ENCODE measurements at regions of chr10 and their contacts with region 1.

Region 1: DNA sequence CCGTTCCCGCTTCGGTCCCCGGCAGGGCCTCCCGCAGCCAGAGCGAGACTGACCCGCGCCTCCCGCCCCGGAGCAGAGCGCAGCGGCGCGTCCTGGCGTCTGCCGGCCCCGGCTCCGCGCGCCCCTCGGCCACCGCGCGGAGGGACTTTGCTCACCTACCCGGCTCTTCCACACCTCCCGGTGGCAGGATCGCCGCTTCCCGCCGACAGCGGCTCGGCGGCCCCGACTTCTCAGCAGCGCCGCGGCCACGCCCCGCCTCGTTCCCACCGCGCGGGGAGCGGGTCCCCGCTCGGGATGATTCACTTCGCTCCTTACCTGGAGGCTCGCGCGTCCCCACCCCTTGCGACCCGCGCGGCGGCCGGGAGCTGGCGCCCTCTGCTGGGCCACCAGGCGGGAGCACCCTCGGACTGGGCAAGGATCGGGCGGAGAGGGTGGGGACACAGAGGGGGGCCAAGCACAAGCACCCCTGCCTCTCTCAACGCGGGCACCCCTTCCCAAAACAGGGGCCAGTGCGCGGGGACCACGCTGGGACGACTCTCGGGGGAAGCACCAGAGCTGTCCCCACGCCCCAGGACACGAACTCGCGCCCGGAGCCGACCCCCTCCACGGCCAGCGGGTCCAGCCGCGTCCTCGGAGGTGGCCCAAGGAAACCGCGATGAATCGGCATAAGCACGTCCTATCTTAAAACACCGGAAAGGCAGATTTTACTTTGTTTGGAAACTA is 101.0 kb upstream of the SVIL start:
- DNase-seq: peak; percentile 60 to 94
- H3K4me3 ChIP-seq: peak overlapping the region; percentile 74 to 97
- H3K27ac ChIP-seq: peak overlapping the region; percentile 95 to 98
- H3K4me1 ChIP-seq: peaks cover 7 to 20% of the 10 kb centered on the region in 2 donors
- H3K27me3 ChIP-seq: no peaks in the 10 kb centered on the region
- CTCF ChIP-seq: peak; percentile 94 to 98 (median 97)

Region 2: GRCh38 chr10:29328983-29329382 is 406.8 kb before region 1 on chr10:
- intact Hi-C with region 1: no loop called
- DNase-seq: no peak
- H3K4me3 ChIP-seq: no peak overlapping the region
- H3K27ac ChIP-seq: no peak overlapping the region
- H3K4me1 ChIP-seq: no peaks in the 10 kb centered on the region
- H3K27me3 ChIP-seq: no peaks in the 10 kb centered on the region
- CTCF ChIP-seq: no peak

Region 3: DNA sequence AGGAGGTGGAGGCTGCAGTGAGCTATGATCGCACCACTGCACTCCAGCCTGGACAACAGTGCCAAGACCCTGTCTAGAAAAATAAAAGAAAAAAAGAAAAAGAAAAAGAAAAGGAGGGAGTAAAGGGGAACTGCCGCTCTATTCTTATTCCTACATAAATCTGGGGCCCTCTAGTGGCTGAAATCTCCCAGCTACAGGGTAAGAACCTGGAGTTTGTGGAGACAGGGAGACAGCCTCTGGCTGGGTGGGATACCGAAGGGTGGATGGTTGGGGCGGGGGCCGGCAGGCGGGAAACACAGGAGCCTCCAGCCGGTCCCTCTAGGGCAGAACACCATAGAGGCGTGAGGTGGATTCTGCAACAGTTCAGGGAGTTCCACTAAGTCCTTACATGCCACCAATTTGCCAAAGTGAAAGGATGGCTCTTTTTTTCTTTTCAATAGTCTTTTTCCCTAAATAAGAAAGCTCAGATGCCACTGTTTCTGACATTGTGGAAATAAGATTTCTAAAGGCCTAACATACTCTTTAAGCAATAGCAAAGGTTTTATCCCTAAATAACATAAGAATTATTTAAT is 218.3 kb before region 1 on chr10:
- intact Hi-C with region 1: loop called (anchors 10 kb)
- DNase-seq: no peak
- H3K4me3 ChIP-seq: no peak overlapping the region
- H3K27ac ChIP-seq: peak overlapping the region; percentile 66 to 72
- H3K4me1 ChIP-seq: peaks cover 0 to 20% of the 10 kb centered on the region in 2 donors
- H3K27me3 ChIP-seq: no peaks in the 10 kb centered on the region
- CTCF ChIP-seq: peak in 2 of 3 experiments; percentile 47 to 54

Region 4: GRCh38 chr10:29635711-29636144 is 100.0 kb before region 1 on chr10:
- intact Hi-C with region 1: loop called (anchors 2 kb)
- DNase-seq: no peak
- H3K4me3 ChIP-seq: peak overlapping the region in 1 of 2 donors; percentile 8
- H3K27ac ChIP-seq: peak overlapping the region; percentile 86 to 91
- H3K4me1 ChIP-seq: peaks cover 4 to 37% of the 10 kb centered on the region in 2 donors
- H3K27me3 ChIP-seq: no peaks in the 10 kb centered on the region
- CTCF ChIP-seq: no peak

Region 5: GRCh38 chr10:29685506-29685905 is 50.3 kb before region 1 on chr10:
- intact Hi-C with region 1: no loop called
- DNase-seq: no peak
- H3K4me3 ChIP-seq: no peak overlapping the region
- H3K27ac ChIP-seq: no peak overlapping the region
- H3K4me1 ChIP-seq: peaks cover 0 to 19% of the 10 kb centered on the region in 2 donors
- H3K27me3 ChIP-seq: no peaks in the 10 kb centered on the region
- CTCF ChIP-seq: no peak

Region 6: GRCh38 chr10:29719281-29719675 is 16.5 kb before region 1 on chr10:
- intact Hi-C with region 1: loop called (anchors 2 kb)
- DNase-seq: no peak
- H3K4me3 ChIP-seq: no peak overlapping the region
- H3K27ac ChIP-seq: peak overlapping the region; percentile 20 to 65
- H3K4me1 ChIP-seq: peaks cover 3 to 41% of the 10 kb centered on the region in 2 donors
- H3K27me3 ChIP-seq: no peaks in the 10 kb centered on the region
- CTCF ChIP-seq: no peak

Region 7: GRCh38 chr10:29811751-29812449 is 76.1 kb after region 1 on chr10:
- intact Hi-C with region 1: loop called (anchors 2 kb)
- DNase-seq: peak; percentile 32 to 90
- H3K4me3 ChIP-seq: no peak overlapping the region
- H3K27ac ChIP-seq: peak overlapping the region; percentile 86 to 93
- H3K4me1 ChIP-seq: peaks cover 3 to 24% of the 10 kb centered on the region in 2 donors
- H3K27me3 ChIP-seq: no peaks in the 10 kb centered on the region
- CTCF ChIP-seq: no peak

Region 8: DNA sequence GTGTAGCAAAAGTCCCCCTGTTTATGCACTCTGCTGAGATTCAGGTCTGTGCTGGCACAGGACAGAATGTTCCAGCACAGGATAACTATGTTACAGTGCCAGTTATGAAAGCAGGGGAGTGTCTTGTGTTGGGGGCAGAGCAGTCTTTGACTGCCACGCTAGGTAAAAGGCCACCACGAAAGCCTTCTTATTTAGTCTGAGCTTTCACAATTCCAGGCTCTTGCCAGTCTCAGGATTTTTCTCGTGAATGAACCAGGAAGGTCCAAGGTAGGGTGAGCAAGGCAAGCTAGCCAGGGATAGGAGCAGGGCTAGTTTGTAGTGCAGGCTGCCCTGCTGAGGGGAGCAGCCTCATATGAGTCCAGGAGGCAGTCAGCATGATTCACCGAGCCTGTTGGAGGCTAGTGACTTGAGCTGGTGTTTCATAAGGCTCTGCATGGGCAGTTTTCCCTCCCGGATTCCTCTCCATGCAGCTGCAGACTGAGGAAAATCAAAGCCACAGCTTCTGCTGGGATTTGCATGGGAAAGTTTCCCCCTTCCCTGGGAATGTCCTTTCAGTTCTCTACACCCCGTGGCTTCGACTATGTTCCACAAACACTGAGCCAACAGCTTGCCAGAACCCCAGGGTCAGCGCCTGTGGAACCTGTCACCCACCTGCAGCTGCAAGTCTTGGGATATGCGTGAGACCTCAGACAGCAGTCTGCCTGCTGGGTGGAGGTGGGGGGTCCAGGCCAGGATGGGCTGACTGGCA is 211.4 kb after region 1 on chr10:
- intact Hi-C with region 1: loop called (anchors 2 kb)
- DNase-seq: peak; percentile 55 to 92
- H3K4me3 ChIP-seq: peak overlapping the region in 1 of 2 donors; percentile 39
- H3K27ac ChIP-seq: peak overlapping the region; percentile 85 to 90
- H3K4me1 ChIP-seq: peaks cover 17 to 42% of the 10 kb centered on the region in 2 donors
- H3K27me3 ChIP-seq: no peaks in the 10 kb centered on the region
- CTCF ChIP-seq: no peak

Region 9: GRCh38 chr10:30127120-30127541 is 391.4 kb after region 1 on chr10:
- intact Hi-C with region 1: no loop called
- DNase-seq: no peak
- H3K4me3 ChIP-seq: no peak overlapping the region
- H3K27ac ChIP-seq: no peak overlapping the region
- H3K4me1 ChIP-seq: no peaks in the 10 kb centered on the region
- H3K27me3 ChIP-seq: no peaks in the 10 kb centered on the region
- CTCF ChIP-seq: no peak